ENCODE measurements at regions of chr1 and their contacts with region 1.

Region 1: DNA sequence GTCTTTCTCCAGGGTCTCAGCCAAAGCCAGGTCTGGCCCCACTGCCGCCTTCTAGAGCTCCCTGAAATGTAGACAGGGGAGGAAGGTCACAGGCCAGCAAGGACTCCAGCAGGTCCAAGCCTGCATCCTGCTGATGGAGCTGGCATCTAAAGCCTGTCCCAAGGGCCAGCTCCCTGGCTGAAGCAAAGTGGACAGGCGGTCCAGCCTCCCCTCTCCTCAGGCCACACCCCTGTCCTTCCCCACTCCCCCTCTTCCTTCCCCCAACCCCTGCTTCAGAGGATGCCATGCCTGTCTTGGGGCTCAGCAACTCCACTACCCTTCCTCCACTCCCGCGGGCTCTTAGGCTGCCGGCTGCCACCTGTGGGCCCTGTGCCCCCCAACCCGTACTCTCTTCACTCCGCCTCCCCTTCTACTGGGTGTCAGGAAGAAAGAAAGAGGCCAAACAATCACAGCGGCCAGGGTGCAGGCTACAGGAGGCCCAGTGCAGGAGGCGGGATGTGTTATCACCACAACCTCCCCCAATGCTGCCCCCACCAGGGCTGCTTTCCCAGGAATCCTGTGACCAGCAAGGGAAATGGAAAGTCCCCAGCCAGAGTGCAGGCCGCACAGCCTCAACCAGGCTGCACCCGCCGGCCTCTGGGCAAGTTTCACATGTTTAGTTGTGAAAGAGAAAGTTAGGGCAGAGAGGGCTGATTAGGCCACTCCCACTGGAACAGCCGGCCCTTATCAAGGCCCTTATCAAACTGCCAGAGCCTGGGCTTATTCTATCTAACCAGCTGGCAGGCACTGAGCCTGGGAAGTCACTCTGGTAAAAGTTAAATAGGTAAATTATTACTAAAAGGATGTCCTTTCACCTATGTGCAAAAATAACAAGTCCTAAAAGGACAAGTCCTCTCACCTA is 34.1 kb downstream of the ACOT7 start:
- DNase-seq: peak; percentile 82
- CTCF ChIP-seq: no peak

Region 2: DNA sequence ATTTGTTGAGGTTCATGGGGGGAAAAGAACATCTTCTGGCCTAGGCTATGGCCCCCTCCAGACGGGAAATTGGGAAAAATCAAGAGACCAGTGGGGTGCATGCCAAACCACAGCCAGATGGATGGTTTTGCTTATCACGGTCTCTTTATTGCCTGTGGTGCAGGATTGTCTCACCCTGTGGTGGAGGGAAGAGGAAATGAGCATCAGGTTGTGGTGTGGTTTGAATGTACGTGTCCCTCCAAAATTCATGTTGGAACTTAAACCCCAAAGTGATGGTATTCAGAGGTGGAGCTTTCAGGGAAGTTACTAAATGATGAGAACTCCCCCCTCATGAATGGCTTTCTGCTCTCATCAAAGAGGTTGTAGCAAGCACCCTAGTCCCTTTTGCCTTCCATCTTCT is 893.0 kb before region 1 on chr1:
- CTCF ChIA-PET with region 1: no interaction called
- POLR2A ChIA-PET with region 1: no interaction called
- DNase-seq: no peak
- CTCF ChIP-seq: no peak

Region 3: DNA sequence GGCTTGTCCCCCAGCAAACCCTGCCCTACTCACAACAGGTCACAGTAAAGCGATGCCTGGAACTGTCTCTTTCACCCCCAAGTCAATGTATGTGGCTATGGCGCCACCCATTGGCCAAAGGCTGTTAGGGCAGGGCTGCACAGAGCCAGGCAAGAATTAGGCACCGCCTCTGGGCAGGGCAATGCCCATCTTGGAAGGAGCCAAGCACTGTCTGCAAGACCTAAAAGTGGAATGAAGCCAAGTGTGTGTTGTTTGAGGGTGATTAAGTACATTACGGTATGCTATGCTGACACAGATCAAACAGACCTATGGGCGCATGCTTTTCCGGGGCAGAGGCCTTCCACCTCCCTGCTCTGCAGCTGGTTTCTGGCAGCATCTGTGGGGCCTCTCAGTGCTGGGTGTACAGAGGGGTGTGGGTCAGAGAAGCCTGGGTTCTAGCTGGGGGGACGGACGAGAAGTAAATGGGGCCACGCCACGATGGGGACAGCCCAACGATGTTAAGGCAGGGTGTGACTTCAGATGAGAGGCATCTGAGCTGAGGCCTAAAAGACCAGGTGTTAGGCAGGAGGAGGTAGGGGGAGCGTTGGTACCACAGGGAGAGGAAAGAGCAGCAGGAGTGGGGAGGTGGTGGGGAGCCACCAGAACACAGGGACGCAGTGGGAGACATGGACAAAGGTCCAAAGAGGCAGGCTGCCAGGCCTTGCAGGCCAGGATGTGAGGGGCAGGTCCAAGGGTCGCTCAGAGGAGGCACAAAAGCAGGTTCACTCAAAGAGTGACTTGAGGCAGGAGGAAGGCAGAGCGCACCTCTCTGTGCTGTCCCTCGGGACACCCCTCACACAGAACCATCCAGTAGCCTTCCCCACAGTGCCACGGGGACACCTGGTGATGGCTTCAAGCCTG is 15.7 kb before region 1 on chr1:
- CTCF ChIA-PET with region 1: interaction called, 57 read pairs
- POLR2A ChIA-PET with region 1: no interaction called
- DNase-seq: peak; percentile 80
- CTCF ChIP-seq: peak; percentile 93

Region 4: GRCh38 chr1:6378096-6378746 is 18.8 kb after region 1 on chr1:
- CTCF ChIA-PET with region 1: interaction called, 24 read pairs
- POLR2A ChIA-PET with region 1: no interaction called
- DNase-seq: no peak
- CTCF ChIP-seq: no peak

Region 5: DNA sequence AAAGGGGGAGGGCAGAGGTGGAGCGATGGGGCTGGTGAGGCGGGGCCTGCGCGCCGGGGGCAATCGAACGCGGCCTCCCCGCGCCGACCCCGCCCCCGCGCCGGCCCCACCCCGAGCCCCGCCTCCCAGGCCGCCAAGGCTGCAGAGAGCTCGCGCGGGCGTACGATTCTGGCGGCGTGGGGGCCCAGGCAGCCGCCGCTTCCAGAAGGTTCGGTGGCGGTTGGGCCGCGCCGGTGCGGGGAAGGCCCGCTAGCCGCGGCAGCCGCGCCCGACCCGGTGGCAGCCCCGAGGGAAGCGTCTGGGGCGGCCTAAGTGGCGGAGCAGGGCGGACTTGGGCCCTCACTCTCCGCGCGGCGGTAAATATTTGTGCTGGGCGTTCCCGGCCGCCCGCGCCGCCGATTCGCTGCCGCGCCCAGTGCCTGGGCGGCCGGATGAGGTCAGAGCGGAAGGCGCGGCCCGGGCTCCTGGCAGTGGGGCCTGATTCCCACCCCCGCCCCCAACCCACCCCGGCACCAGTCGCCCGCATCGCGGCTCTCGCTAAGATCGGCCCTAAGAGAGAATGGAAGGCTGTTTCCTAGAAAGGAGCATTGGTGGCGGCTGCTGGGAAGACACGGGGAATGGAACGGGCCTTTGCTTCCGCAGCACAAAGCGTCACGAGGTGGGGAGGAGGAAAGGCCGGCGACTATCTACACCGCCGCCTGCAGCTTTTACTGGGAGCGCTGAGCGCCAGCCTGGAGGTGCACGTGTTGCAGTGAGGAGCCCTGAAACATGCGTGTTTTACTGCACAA is 34.1 kb after region 1 on chr1 and contains the start of gene ACOT7:
- CTCF ChIA-PET with region 1: interaction called, 47 read pairs
- POLR2A ChIA-PET with region 1: no interaction called
- DNase-seq: peak; percentile 97
- CTCF ChIP-seq: no peak

Measured in GM10248 (cell line).